Naive thymus-derived CD4-positive, alpha-beta T cell (primary cell): ENCODE measurements at regions of chr2 and their contacts with region 1.

Region 1: GRCh38 chr2:241315093-241315878 is at the start of gene HDLBP:
- DNase-seq: peak; percentile 100
- ATAC-seq: peak; percentile 87
- H3K4me3 ChIP-seq: peak within 1 kb of the TSS; percentile 98
- H3K4me3 Mint-ChIP-seq: peak within 1 kb of the TSS; percentile 93 to 100 (median 98)
- H3K27ac ChIP-seq: peak within 1 kb of the TSS; percentile 95
- H3K27ac Mint-ChIP-seq: peak within 1 kb of the TSS; percentile 96 to 100 (median 99)
- H3K4me1 ChIP-seq: peaks cover 44 to 48% of the 10 kb centered on the region in 2 donors
- H3K4me1 Mint-ChIP-seq: peaks cover 62 to 84% (median 75%) of the 10 kb centered on the region in 7 donors
- H3K27me3 ChIP-seq: no peaks in the 10 kb centered on the region
- H3K27me3 Mint-ChIP-seq: no peaks in the 10 kb centered on the region
- total RNA-seq, gene HDLBP: 127 to 231 (median 169) TPM

Region 2: DNA sequence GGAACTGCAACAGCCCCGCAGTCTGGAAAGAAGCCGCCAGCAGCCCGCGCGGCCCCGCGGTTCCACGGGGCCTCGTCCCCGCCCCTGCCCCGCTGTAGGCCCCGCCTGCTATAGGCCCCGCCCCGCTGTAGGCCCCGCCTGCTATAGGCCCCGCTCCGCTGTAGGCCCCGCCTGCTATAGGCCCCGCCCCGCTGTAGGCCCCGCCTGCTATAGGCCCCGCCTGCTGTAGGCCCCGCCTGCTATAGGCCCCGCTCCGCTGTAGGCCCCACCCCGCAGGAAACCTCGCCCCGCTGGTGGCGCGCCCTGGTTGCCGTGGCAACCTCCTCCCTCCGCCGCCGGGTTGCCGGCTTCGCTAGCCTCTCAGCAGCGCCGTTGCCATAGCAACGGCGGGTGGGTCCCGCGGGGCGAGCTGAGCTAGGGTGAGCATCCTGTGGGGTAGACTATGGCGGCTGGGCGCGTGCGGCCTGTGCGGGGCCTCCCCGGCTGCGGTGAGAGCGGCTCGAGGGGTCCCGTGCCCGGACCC is 483.0 kb before region 1 on chr2:
- CTCF ChIA-PET with region 1: no interaction called
- POLR2A ChIA-PET with region 1: no interaction called
- intact Hi-C with region 1: loop called in 1 of 2 experiments (anchors 1 kb)
- DNase-seq: peak; percentile 93 to 100 (median 99)
- ATAC-seq: peak; percentile 96
- H3K4me3 ChIP-seq: peak overlapping the region; percentile 32
- H3K4me3 Mint-ChIP-seq: peak overlapping the region in 8 of 10 donors; percentile 56 to 78 (median 71)
- H3K27ac ChIP-seq: no peak overlapping the region
- H3K27ac Mint-ChIP-seq: peak overlapping the region in 4 of 9 donors; percentile 22 to 88 (median 74)
- H3K4me1 ChIP-seq: peaks cover 11 to 14% of the 10 kb centered on the region in 2 donors
- H3K4me1 Mint-ChIP-seq: peaks cover 0 to 7% (median 0%) of the 10 kb centered on the region in 7 donors
- H3K27me3 ChIP-seq: no peaks in the 10 kb centered on the region
- H3K27me3 Mint-ChIP-seq: peaks cover 4 to 30% (median 19%) of the 10 kb centered on the region in 5 donors

Region 3: GRCh38 chr2:241271641-241272297 is 43.5 kb before region 1 on chr2:
- CTCF ChIA-PET with region 1: no interaction called
- POLR2A ChIA-PET with region 1: interaction called, 6 read pairs
- intact Hi-C with region 1: loop called (anchors 1 kb)
- DNase-seq: peak; percentile 37 to 69 (median 42)
- ATAC-seq: peak; percentile 83
- H3K4me3 ChIP-seq: peak overlapping the region; percentile 63
- H3K4me3 Mint-ChIP-seq: peak overlapping the region; percentile 91 to 97 (median 94)
- H3K27ac ChIP-seq: peak overlapping the region; percentile 76
- H3K27ac Mint-ChIP-seq: peak overlapping the region; percentile 70 to 94 (median 89)
- H3K4me1 ChIP-seq: peaks cover 8 to 16% of the 10 kb centered on the region in 2 donors
- H3K4me1 Mint-ChIP-seq: peaks cover 41 to 65% (median 60%) of the 10 kb centered on the region in 7 donors
- H3K27me3 ChIP-seq: no peaks in the 10 kb centered on the region
- H3K27me3 Mint-ChIP-seq: no peaks in the 10 kb centered on the region

Region 4: GRCh38 chr2:241339839-241340630 is 24.7 kb after region 1 on chr2:
- CTCF ChIA-PET with region 1: interaction called, 3 read pairs
- POLR2A ChIA-PET with region 1: interaction called, 10 read pairs
- intact Hi-C with region 1: loop called in 1 of 2 experiments (anchors 2 kb)
- DNase-seq: no peak
- ATAC-seq: no peak
- H3K4me3 ChIP-seq: no peak overlapping the region
- H3K4me3 Mint-ChIP-seq: peak overlapping the region in 3 of 10 donors; percentile 23 to 66 (median 66)
- H3K27ac ChIP-seq: no peak overlapping the region
- H3K27ac Mint-ChIP-seq: peak overlapping the region in 8 of 9 donors; percentile 17 to 87 (median 77)
- H3K4me1 ChIP-seq: peaks cover 0 to 11% of the 10 kb centered on the region in 2 donors
- H3K4me1 Mint-ChIP-seq: peaks cover 16 to 44% (median 39%) of the 10 kb centered on the region in 7 donors
- H3K27me3 ChIP-seq: no peaks in the 10 kb centered on the region
- H3K27me3 Mint-ChIP-seq: no peaks in the 10 kb centered on the region

Region 5: GRCh38 chr2:241609859-241610793 is 294.8 kb after region 1 on chr2:
- CTCF ChIA-PET with region 1: no interaction called
- POLR2A ChIA-PET with region 1: no interaction called
- intact Hi-C with region 1: loop called in 1 of 2 experiments (anchors 1 kb)
- DNase-seq: peak; percentile 87 to 92 (median 90)
- ATAC-seq: peak; percentile 99
- H3K4me3 ChIP-seq: peak overlapping the region; percentile 53
- H3K4me3 Mint-ChIP-seq: peak overlapping the region in 9 of 10 donors; percentile 61 to 79 (median 71)
- H3K27ac ChIP-seq: peak overlapping the region; percentile 61
- H3K27ac Mint-ChIP-seq: peak overlapping the region; percentile 9 to 95 (median 68)
- H3K4me1 ChIP-seq: peaks cover 14 to 17% of the 10 kb centered on the region in 2 donors
- H3K4me1 Mint-ChIP-seq: peaks cover 16 to 33% (median 24%) of the 10 kb centered on the region in 7 donors
- H3K27me3 ChIP-seq: no peaks in the 10 kb centered on the region
- H3K27me3 Mint-ChIP-seq: no peaks in the 10 kb centered on the region

Region 6: GRCh38 chr2:241686649-241687425 is 371.6 kb after region 1 on chr2 and contains the start of gene DTYMK:
- CTCF ChIA-PET with region 1: no interaction called
- POLR2A ChIA-PET with region 1: interaction called, 7 read pairs
- intact Hi-C with region 1: loop called (anchors 1 kb)
- DNase-seq: peak; percentile 92 to 98 (median 97)
- ATAC-seq: peak; percentile 97
- H3K4me3 ChIP-seq: peak within 1 kb of the TSS; percentile 91
- H3K4me3 Mint-ChIP-seq: peak within 1 kb of the TSS; percentile 84 to 98 (median 95)
- H3K27ac ChIP-seq: peak within 1 kb of the TSS; percentile 81
- H3K27ac Mint-ChIP-seq: peak within 1 kb of the TSS; percentile 74 to 96 (median 88)
- H3K4me1 ChIP-seq: peaks cover 8 to 18% of the 10 kb centered on the region in 2 donors
- H3K4me1 Mint-ChIP-seq: peaks cover 4 to 40% (median 31%) of the 10 kb centered on the region in 7 donors
- H3K27me3 ChIP-seq: no peaks in the 10 kb centered on the region
- H3K27me3 Mint-ChIP-seq: no peaks in the 10 kb centered on the region
- total RNA-seq, gene DTYMK: 12.0 to 65.7 (median 17.0) TPM